CD4-positive, alpha-beta memory T cell (primary cell): ENCODE measurements at regions of chrX and their contacts with region 1.

Region 1: DNA sequence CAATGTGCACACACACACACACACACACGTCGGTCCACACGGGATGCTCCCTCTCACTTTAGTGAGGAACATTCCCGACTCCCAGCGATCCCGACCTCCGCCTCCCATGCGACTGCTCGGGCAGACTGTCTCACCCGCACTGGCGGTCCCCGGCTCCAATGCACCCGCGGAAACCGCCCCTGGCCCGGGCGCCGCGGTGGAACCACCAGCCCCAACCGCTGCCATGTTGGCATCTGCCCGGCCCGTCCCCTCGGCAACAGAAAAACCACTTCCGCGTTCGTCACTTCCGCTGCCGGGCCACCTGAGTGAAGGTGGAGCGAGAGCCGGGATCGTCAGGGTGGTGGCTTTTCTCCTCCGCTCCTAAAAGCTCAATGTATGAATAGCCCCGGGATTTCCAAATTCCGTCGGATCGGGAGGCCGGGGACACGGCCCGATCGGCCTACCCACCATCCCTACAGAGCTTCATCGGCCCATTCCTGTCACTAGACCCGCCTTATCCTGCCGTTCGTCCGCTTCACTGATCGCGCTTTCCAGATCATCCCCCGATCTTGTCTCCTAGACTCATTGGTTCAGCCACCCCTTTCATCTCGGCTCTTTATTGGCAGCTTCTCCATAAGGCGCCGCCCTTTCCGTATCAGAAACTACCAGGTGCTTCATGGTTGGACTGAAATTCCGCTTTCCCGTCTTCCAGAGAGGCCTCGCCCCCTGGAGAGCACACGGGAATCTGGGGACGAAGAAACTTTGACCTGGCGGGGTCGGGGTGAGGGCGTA is at the start of gene SLC35A2:
- DNase-seq: peak; percentile 89 to 92 (median 90)
- H3K4me3 ChIP-seq: peak within 1 kb of the TSS; percentile 47 to 74
- H3K4me3 Mint-ChIP-seq: peak within 1 kb of the TSS; percentile 85 to 96 (median 92)
- H3K27ac ChIP-seq: peak within 1 kb of the TSS; percentile 76
- H3K27ac Mint-ChIP-seq: peak within 1 kb of the TSS; percentile 93 to 100 (median 98)
- H3K4me1 ChIP-seq: peaks cover 58% of the 10 kb centered on the region
- H3K4me1 Mint-ChIP-seq: peaks cover 26 to 62% (median 43%) of the 10 kb centered on the region in 4 donors
- H3K27me3 ChIP-seq: no peaks in the 10 kb centered on the region
- H3K27me3 Mint-ChIP-seq: no peaks in the 10 kb centered on the region
- total RNA-seq, gene SLC35A2: 13.8 to 15.8 TPM

Region 2: DNA sequence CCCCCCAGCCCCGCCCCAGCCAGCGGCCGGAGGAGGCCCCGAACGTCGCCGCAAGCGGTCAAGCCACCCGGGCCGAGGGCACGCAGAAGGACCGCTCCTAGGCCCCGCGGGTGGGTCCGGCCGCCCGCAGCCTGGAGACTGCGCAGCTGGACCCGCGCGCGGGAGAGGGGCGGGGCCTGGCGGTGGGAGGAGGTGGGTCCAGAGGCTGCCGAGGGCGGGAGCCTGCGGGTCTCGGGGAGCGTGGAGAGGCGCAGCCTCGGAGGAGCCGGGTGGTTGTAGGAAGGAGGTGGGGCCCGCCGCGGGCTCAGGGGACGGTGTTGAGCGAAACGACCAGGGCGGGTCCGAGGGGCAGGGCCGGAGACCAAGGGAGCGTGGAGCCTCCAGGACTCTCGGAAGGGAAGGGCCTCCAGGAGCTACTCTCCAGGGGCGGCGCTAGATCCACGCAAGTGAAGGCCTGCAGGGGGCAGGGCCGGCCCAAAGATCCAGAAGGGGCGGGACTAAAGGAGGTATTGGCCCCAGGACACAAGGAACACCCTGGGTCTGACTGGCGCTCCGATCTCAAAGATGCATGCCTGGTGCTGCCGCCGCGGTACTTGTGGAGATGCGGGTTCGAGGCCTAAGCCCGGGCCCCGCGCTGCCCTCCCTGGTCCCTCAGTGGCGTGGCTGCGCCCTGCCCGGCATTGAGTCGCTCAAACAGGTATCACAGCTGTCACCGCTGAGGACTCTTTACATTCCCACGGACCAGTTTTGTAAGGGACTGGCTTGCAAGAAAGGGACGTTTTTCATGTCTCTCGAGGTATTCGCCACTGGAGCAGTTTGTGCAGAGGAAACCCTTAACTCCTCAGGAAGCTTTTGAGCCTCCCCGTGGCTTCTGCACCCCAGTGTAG is 20.0 kb before region 1 on chrX:
- CTCF ChIA-PET with region 1: interaction called, 12 read pairs
- POLR2A ChIA-PET with region 1: interaction called, 47 read pairs
- intact Hi-C with region 1: loop called (anchors 1 kb)
- DNase-seq: peak; percentile 76 to 85 (median 78)
- H3K4me3 ChIP-seq: peak overlapping the region in 1 of 2 donors; percentile 49
- H3K4me3 Mint-ChIP-seq: peak overlapping the region; percentile 75 to 97 (median 82)
- H3K27ac ChIP-seq: peak overlapping the region; percentile 52
- H3K27ac Mint-ChIP-seq: peak overlapping the region in 6 of 7 donors; percentile 37 to 90 (median 74)
- H3K4me1 ChIP-seq: peaks cover 15% of the 10 kb centered on the region
- H3K4me1 Mint-ChIP-seq: peaks cover 10 to 30% (median 21%) of the 10 kb centered on the region in 4 donors
- H3K27me3 ChIP-seq: no peaks in the 10 kb centered on the region
- H3K27me3 Mint-ChIP-seq: peaks cover 0 to 1% of the 10 kb centered on the region in 2 donors

Region 3: GRCh38 chrX:48897621-48898306 is 13.8 kb before region 1 on chrX and contains the starts of genes PQBP1 and TIMM17B:
- CTCF ChIA-PET with region 1: interaction called, 12 read pairs
- POLR2A ChIA-PET with region 1: interaction called, 47 read pairs
- intact Hi-C with region 1: loop called (anchors 1 kb)
- DNase-seq: peak; percentile 88 to 93 (median 92)
- H3K4me3 ChIP-seq: peak within 1 kb of the TSS; percentile 78 to 92
- H3K4me3 Mint-ChIP-seq: peak within 1 kb of the TSS; percentile 86 to 96 (median 92)
- H3K27ac ChIP-seq: peak within 1 kb of the TSS; percentile 93
- H3K27ac Mint-ChIP-seq: peak within 1 kb of the TSS; percentile 88 to 99 (median 96)
- H3K4me1 ChIP-seq: peaks cover 24% of the 10 kb centered on the region
- H3K4me1 Mint-ChIP-seq: peaks cover 4 to 34% (median 17%) of the 10 kb centered on the region in 4 donors
- H3K27me3 ChIP-seq: no peaks in the 10 kb centered on the region
- H3K27me3 Mint-ChIP-seq: no peaks in the 10 kb centered on the region
- total RNA-seq, gene PQBP1: 59.6 to 64.4 TPM
- total RNA-seq, gene TIMM17B: 42.6 to 46.2 TPM

Region 4: DNA sequence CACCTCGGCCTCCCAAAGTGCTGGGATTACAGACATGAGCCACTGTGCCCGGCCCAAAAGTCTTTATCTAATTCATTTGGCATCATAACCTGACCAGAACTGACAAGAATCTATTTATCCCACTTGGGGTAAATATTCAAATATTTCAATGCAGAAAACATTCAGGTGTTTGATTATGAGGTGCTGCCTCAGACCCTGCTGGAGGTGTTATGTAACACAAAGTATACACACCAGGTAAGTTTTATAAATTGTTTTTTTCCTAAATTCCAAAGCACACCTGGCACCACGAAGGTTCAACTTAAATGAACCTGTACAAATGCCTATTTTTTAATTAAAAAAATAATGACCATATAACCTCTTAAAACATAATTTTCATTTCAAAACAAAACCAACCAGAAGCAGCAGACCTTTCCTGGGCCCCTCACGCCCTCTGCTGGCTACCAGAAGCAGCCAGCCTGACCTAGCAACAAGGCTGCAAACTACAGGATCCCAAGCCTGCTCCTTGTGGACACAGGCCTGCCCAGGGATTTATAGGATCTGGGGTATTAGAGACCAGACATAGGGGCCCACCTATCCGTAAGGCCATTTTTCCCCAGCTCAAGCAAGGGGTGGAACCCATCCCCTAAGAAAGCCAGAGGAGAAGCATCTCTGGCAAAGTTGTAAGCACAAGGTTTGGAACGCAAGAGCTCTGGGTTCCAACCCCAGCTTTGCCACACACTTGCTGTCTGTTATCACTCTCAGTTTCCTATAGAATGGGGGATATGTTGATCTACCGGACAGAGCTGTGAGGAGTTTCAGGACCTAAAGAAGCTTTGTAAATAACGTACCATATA is 34.1 kb after region 1 on chrX:
- CTCF ChIA-PET with region 1: interaction called, 9 read pairs
- POLR2A ChIA-PET with region 1: interaction called, 86 read pairs
- intact Hi-C with region 1: no loop called
- DNase-seq: peak; percentile 45 to 66 (median 62)
- H3K4me3 ChIP-seq: no peak overlapping the region
- H3K4me3 Mint-ChIP-seq: peak overlapping the region in 6 of 8 donors; percentile 11 to 64 (median 26)
- H3K27ac ChIP-seq: no peak overlapping the region
- H3K27ac Mint-ChIP-seq: peak overlapping the region; percentile 66 to 92 (median 79)
- H3K4me1 ChIP-seq: peaks cover 70% of the 10 kb centered on the region
- H3K4me1 Mint-ChIP-seq: peaks cover 34 to 63% (median 48%) of the 10 kb centered on the region in 4 donors
- H3K27me3 ChIP-seq: no peaks in the 10 kb centered on the region
- H3K27me3 Mint-ChIP-seq: no peaks in the 10 kb centered on the region